Sigmoid colon (tissue), 7 donors: ENCODE measurements at regions of chr3 and their contacts with region 1.

Region 1: GRCh38 chr3:170414202-170414663 is 4.4 kb upstream of the CLDN11 start:
- DNase-seq: no peak
- H3K4me3 ChIP-seq: no peak overlapping the region
- H3K27ac ChIP-seq: no peak overlapping the region
- H3K4me1 ChIP-seq: peaks cover 0 to 16% (median 12%) of the 10 kb centered on the region in 4 donors
- H3K27me3 ChIP-seq: peaks cover 11 to 34% (median 22%) of the 10 kb centered on the region in 3 donors
- CTCF ChIP-seq: peak; percentile 20 to 79 (median 73)
- EP300 ChIP-seq: no peak
- POLR2A ChIP-seq: no peak

Region 2: GRCh38 chr3:170307671-170308403 is 106.4 kb before region 1 on chr3:
- intact Hi-C with region 1: loop called (anchors 5 kb)
- DNase-seq: no peak
- H3K4me3 ChIP-seq: no peak overlapping the region
- H3K27ac ChIP-seq: no peak overlapping the region
- H3K4me1 ChIP-seq: peaks cover 0 to 7% (median 0%) of the 10 kb centered on the region in 4 donors
- H3K27me3 ChIP-seq: no peaks in the 10 kb centered on the region
- CTCF ChIP-seq: no peak
- EP300 ChIP-seq: no peak
- POLR2A ChIP-seq: no peak

Region 3: GRCh38 chr3:170689893-170690660 is 275.8 kb after region 1 on chr3:
- intact Hi-C with region 1: loop called (anchors 10 kb)
- DNase-seq: peak; percentile 71
- H3K4me3 ChIP-seq: no peak overlapping the region
- H3K27ac ChIP-seq: no peak overlapping the region
- H3K4me1 ChIP-seq: peaks cover 0 to 12% (median 11%) of the 10 kb centered on the region in 4 donors
- H3K27me3 ChIP-seq: no peaks in the 10 kb centered on the region
- CTCF ChIP-seq: peak in 3 of 4 experiments; percentile 23 to 50 (median 27)
- EP300 ChIP-seq: no peak
- POLR2A ChIP-seq: no peak

Region 4: GRCh38 chr3:170811928-170812591 is 397.8 kb after region 1 on chr3:
- intact Hi-C with region 1: loop called (anchors 2 kb)
- DNase-seq: peak; percentile 82
- H3K4me3 ChIP-seq: no peak overlapping the region
- H3K27ac ChIP-seq: peak overlapping the region in 1 of 4 donors; percentile 22
- H3K4me1 ChIP-seq: peaks cover 0 to 11% (median 2%) of the 10 kb centered on the region in 4 donors
- H3K27me3 ChIP-seq: no peaks in the 10 kb centered on the region
- CTCF ChIP-seq: peak; percentile 72 to 91 (median 86)
- EP300 ChIP-seq: no peak
- POLR2A ChIP-seq: no peak